Right ventricle myocardium inferior (tissue), 1 donor: ENCODE measurements at regions of chr19 and their contacts with region 1.

Region 1: DNA sequence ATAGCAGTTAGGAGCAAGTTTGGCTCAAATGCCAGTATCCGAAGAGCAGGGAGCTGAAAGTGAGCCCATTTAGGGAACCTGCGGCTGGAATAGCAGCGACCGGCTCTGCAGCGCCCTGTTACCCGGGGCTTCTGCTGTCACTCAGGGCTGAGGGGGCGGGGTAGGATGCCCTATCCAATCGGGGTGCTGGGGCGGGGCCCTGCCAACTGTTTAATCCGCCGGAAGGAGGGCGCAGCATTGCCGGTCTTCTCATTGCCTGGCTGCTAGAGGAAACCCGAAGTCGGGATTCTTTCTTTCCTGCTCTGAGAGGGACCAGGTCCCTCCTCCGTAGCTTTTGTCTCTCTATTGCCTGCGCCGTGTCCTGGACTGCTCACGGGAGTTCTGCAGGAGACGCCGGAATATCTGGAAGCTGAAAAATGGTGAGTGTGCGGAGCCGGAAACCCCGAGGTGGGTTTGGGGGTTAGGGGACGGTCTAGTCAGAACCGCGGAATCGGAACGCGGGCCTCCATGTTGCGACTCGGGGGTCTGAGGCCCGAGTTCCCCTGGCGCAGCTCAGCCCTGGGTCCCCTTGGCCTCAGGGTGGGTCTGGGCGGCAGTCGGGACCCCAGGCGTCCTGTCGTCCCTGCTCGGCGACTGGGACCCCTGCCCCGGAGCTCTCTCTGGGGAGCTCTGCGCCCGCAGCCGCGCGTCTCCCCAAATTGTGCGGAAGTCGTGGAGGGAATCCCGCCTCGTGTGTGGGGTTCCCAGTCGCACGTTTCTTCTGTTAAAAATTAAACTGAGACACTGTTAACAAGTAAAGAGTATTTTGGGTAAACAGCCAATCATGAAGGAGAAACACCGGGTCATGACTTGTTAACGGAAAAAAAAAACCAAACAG is 22.8 kb downstream of the ZNF763 start:
- DNase-seq: peak; percentile 98
- ATAC-seq: peak; percentile 99

Region 2: DNA sequence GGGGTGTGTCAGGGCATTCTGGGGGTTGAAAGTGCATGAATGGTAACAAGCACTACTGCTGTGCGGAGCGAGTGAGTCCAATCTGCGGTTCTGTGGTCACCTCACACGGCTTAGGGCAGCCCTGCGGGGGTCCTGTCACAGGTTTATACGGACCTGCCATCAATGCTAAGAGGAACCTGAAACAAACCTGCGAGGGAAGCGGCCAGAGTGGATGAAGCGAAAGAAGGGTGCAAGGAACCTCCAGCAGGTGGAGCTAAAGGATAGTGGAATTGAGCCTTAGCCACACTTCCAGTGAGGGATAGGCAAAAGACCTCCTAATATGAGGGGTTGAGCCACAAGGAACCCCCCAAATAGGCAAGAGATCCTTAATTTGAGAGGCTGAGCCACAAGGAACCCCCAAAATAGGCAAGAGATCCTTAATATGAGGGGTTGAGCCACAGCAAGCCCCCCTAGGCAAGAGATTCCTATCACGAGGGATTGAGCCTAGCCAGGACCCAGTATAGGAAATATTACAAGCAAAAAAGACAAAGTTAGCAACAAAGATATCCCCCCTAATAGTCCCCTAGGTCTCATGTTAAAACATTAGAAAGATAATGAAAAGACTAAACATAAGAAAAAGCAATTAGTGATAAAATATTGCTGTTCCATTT is 106.4 kb before region 1 on chr19:
- intact Hi-C with region 1: loop called (anchors 2 kb)
- DNase-seq: no peak
- ATAC-seq: peak; percentile 67

Region 3: DNA sequence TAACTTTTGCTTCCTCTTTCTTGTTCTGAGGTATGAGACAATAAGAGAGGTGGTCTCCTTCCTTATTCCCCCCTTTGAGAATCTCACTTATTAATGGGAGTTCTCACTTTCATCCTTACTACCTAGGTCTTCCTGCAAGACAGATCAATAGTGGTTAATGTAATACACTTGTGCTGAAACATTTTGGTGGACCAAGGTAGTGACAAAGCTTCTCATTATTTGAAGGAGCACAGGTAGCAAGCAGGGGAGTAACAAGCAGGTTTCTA is 44.9 kb before region 1 on chr19:
- intact Hi-C with region 1: no loop called
- DNase-seq: no peak
- ATAC-seq: no peak

Region 4: GRCh38 chr19:11964858-11965645 is 22.6 kb before region 1 on chr19 and contains the start of gene ZNF763:
- intact Hi-C with region 1: loop called (anchors 1 kb)
- DNase-seq: peak; percentile 96
- ATAC-seq: peak; percentile 99
- total RNA-seq, gene ZNF763: 2.6 TPM